GM10248 (cell line): ENCODE measurements at regions of chr1 and their contacts with region 1.

Region 1: DNA sequence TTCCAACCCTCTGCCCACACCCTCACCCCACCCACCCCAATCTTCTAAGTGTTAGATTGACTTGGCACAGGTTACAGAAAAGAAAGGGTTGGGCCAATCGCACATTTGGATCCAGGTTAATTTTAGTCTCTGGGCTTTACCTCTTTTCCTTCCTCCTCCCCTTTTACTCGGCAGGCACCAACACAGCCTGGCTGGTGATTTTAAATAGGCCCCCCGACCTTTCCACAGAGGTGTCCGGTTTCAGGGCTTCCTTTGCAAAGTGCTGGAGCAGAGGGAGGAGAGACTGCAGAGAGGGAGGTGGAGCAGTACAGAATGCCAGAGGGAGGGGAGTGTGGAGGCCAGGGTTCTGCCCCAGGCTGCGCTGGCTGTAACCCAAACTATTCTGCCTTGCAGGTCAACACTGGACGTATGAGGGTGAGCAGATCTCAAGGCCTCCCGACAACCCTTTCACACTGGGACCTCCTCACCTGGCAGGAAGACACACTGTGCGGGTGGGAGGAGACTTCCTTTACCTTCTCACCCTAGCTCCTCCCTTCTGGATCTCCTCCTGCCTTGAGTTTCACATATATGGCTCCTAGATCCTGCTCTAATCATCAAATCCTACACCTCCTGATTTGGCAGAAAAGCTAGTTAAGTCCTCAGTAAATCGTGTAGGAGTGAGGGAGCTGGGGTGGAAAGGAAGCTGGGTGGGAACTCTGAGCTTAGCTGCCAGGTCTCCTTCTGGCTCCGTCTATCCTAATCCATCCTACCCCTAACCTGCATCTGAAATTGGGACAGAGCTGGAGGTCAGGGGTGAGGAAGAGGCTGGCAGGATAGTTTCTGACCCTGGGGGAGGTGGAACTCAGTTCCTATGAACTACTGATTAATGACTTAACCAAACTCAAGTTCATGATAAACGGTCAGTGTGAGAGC is 2.4 kb downstream of the CA14 start:
- DNase-seq: no peak
- CTCF ChIP-seq: no peak

Region 2: DNA sequence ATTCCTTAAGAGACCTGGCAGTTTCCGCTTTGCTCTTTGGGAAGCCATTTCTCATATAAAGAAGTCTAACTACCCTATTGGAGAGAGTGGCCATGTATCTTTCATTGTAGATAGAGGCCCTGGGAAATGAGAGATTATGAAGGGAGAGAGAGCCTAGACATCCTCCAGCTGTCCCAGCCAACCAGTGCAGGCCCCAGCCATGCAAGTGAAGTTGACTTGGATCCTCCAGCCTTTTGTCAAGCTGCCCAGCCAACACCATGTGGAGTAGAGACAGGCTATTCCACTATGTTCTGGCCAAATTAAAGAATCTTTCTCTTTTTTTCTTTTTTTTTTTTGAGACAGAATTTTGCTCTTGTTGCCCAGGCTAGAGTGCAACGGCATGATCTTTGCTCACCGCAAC is 17.0 kb before region 1 on chr1:
- CTCF ChIA-PET with region 1: interaction called, 12 read pairs
- POLR2A ChIA-PET with region 1: no interaction called
- DNase-seq: no peak
- CTCF ChIP-seq: no peak

Region 3: GRCh38 chr1:150515328-150516048 is 255.5 kb after region 1 on chr1 and contains the start of gene FALEC:
- CTCF ChIA-PET with region 1: interaction called, 24 read pairs
- POLR2A ChIA-PET with region 1: no interaction called
- DNase-seq: peak; percentile 99
- CTCF ChIP-seq: no peak

Region 4: GRCh38 chr1:150537732-150538684 is 278.0 kb after region 1 on chr1:
- CTCF ChIA-PET with region 1: interaction called, 15 read pairs
- POLR2A ChIA-PET with region 1: interaction called, 15 read pairs
- DNase-seq: no peak
- CTCF ChIP-seq: no peak